ENCODE measurements at regions of chr2 and their contacts with region 1.

Region 1: DNA sequence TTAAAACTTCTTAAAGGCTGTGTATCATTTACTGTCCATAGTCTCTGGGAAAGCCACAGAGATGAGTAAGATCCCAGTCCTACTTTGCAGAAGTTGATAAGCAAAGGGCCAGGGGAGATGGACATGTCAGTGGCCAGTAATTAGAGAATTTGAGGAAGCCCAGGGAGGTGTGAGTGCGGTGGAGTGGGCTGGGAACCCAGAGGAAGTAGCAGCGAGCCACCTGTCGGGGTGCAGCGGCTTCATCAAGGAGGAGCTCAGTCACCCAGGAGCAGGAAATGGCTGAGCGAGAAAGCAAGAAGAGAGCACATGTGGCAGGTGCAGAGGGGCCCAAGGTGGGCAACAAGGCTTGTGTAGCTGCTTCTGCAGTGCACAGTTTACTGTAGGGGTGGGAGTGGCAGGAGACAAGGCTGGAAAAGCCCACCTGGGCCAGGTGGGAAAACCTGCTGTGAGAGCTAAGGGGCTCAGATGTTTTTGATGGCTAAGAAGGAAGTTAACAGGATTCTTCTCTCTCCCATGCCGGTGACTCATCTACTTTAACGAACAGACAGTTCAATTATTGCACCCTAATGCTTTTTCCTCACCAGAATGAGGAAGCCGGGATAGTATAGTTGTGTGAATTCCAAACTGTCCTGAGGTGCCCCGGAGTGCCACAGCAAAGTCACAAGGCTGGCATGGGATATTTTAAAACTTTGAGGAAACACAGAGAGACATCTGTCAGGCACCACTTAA is 34.8 kb upstream of the MGAT5 start:
- DNase-seq: peak; percentile 61
- ATAC-seq: no peak
- H3K4me3 Mint-ChIP-seq: peak overlapping the region; percentile 22
- H3K27ac Mint-ChIP-seq: peak overlapping the region; percentile 79
- H3K4me1 Mint-ChIP-seq: peaks cover 68% of the 10 kb centered on the region
- H3K27me3 Mint-ChIP-seq: no peaks in the 10 kb centered on the region

Region 2: GRCh38 chr2:134169788-134170187 is 49.3 kb before region 1 on chr2:
- CTCF ChIA-PET with region 1: no interaction called
- POLR2A ChIA-PET with region 1: interaction called, 8 read pairs
- intact Hi-C with region 1: loop called (anchors 1 kb)
- DNase-seq: peak; percentile 51
- ATAC-seq: peak; percentile 91
- H3K4me3 Mint-ChIP-seq: no peak overlapping the region
- H3K27ac Mint-ChIP-seq: peak overlapping the region; percentile 13
- H3K4me1 Mint-ChIP-seq: peaks cover 85% of the 10 kb centered on the region
- H3K27me3 Mint-ChIP-seq: no peaks in the 10 kb centered on the region

Region 3: DNA sequence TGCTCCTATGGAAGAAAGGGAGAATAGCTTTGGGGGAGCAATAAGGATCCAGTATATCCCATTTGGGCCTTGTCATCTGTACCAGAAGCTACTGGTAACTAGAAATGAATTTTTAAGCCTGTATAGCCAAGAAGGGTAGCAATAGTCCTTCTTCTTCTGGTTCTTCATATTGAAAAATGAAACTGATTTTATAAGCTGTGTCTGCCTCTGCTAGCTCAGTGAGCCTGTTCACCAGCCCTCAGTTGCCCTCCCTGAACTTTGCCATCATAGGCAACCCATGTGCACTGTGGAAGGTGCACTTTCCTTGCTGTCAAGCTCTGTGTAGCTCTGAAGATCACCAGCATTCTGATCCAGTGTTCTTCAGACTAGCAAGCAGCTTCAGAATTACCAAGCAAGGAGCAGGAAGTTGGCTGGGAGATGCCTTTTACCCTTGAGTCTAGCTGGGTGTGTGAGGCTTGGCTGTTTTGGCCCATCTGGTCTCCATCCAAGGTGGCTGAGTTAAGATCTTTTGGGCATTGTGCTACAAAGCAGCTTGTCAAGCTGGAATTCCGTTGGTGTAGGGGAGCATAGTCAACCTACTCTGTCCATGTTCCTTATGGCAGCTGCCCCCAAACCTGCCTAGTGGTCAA is 21.0 kb before region 1 on chr2:
- CTCF ChIA-PET with region 1: interaction called, 14 read pairs
- POLR2A ChIA-PET with region 1: interaction called, 3 read pairs
- intact Hi-C with region 1: no loop called
- DNase-seq: no peak
- ATAC-seq: peak; percentile 68
- H3K4me3 Mint-ChIP-seq: peak overlapping the region; percentile 25
- H3K27ac Mint-ChIP-seq: peak overlapping the region; percentile 90
- H3K4me1 Mint-ChIP-seq: peaks cover 80% of the 10 kb centered on the region
- H3K27me3 Mint-ChIP-seq: no peaks in the 10 kb centered on the region

Region 4: GRCh38 chr2:134207564-134208209 is 11.4 kb before region 1 on chr2:
- CTCF ChIA-PET with region 1: interaction called, 22 read pairs
- POLR2A ChIA-PET with region 1: interaction called, 4 read pairs
- intact Hi-C with region 1: no loop called
- DNase-seq: peak; percentile 82
- ATAC-seq: peak; percentile 87
- H3K4me3 Mint-ChIP-seq: no peak overlapping the region
- H3K27ac Mint-ChIP-seq: no peak overlapping the region
- H3K4me1 Mint-ChIP-seq: peaks cover 6% of the 10 kb centered on the region
- H3K27me3 Mint-ChIP-seq: no peaks in the 10 kb centered on the region

Region 5: GRCh38 chr2:134232868-134233727 is 14.0 kb after region 1 on chr2:
- CTCF ChIA-PET with region 1: interaction called, 12 read pairs
- POLR2A ChIA-PET with region 1: interaction called, 5 read pairs
- intact Hi-C with region 1: loop called (anchors 1 kb)
- DNase-seq: peak; percentile 47
- ATAC-seq: peak; percentile 82
- H3K4me3 Mint-ChIP-seq: peak overlapping the region; percentile 36
- H3K27ac Mint-ChIP-seq: peak overlapping the region; percentile 76
- H3K4me1 Mint-ChIP-seq: peaks cover 81% of the 10 kb centered on the region
- H3K27me3 Mint-ChIP-seq: no peaks in the 10 kb centered on the region

Region 6: GRCh38 chr2:134245340-134245984 is 26.4 kb after region 1 on chr2:
- CTCF ChIA-PET with region 1: interaction called, 13 read pairs
- POLR2A ChIA-PET with region 1: interaction called, 4 read pairs
- intact Hi-C with region 1: loop called (anchors 1 to 5 kb)
- DNase-seq: peak; percentile 87
- ATAC-seq: peak; percentile 37
- H3K4me3 Mint-ChIP-seq: no peak overlapping the region
- H3K27ac Mint-ChIP-seq: no peak overlapping the region
- H3K4me1 Mint-ChIP-seq: peaks cover 82% of the 10 kb centered on the region
- H3K27me3 Mint-ChIP-seq: no peaks in the 10 kb centered on the region

Region 7: GRCh38 chr2:134301099-134301927 is 82.2 kb after region 1 on chr2:
- CTCF ChIA-PET with region 1: no interaction called
- POLR2A ChIA-PET with region 1: no interaction called
- intact Hi-C with region 1: loop called in 1 of 2 experiments (anchors 5 kb)
- DNase-seq: no peak
- ATAC-seq: peak; percentile 88
- H3K4me3 Mint-ChIP-seq: peak overlapping the region; percentile 8
- H3K27ac Mint-ChIP-seq: peak overlapping the region; percentile 51
- H3K4me1 Mint-ChIP-seq: peaks cover 59% of the 10 kb centered on the region
- H3K27me3 Mint-ChIP-seq: no peaks in the 10 kb centered on the region